CD4-positive, alpha-beta memory T cell (primary cell): ENCODE measurements at regions of chr10 and their contacts with region 1.

Region 1: GRCh38 chr10:22655311-22655981 is 58.9 kb downstream of the PIP4K2A start:
- DNase-seq: peak; percentile 75 to 83 (median 80)
- H3K4me3 ChIP-seq: peak overlapping the region; percentile 12 to 40
- H3K4me3 Mint-ChIP-seq: peak overlapping the region; percentile 79 to 94 (median 84)
- H3K27ac ChIP-seq: peak overlapping the region; percentile 61
- H3K27ac Mint-ChIP-seq: peak overlapping the region; percentile 85 to 95 (median 95)
- H3K4me1 ChIP-seq: peaks cover 100% of the 10 kb centered on the region
- H3K4me1 Mint-ChIP-seq: peaks cover 70 to 100% (median 89%) of the 10 kb centered on the region in 4 donors
- H3K27me3 ChIP-seq: no peaks in the 10 kb centered on the region
- H3K27me3 Mint-ChIP-seq: no peaks in the 10 kb centered on the region

Region 2: GRCh38 chr10:22573820-22574569 is 81.5 kb before region 1 on chr10:
- CTCF ChIA-PET with region 1: interaction called, 16 read pairs
- POLR2A ChIA-PET with region 1: interaction called, 3 read pairs
- intact Hi-C with region 1: no loop called
- DNase-seq: peak; percentile 17 to 40 (median 21)
- H3K4me3 ChIP-seq: no peak overlapping the region
- H3K4me3 Mint-ChIP-seq: peak overlapping the region in 3 of 8 donors; percentile 9 to 77 (median 31)
- H3K27ac ChIP-seq: no peak overlapping the region
- H3K27ac Mint-ChIP-seq: peak overlapping the region; percentile 27 to 78 (median 72)
- H3K4me1 ChIP-seq: peaks cover 37% of the 10 kb centered on the region
- H3K4me1 Mint-ChIP-seq: peaks cover 39 to 77% (median 58%) of the 10 kb centered on the region in 4 donors
- H3K27me3 ChIP-seq: no peaks in the 10 kb centered on the region
- H3K27me3 Mint-ChIP-seq: no peaks in the 10 kb centered on the region

Region 3: DNA sequence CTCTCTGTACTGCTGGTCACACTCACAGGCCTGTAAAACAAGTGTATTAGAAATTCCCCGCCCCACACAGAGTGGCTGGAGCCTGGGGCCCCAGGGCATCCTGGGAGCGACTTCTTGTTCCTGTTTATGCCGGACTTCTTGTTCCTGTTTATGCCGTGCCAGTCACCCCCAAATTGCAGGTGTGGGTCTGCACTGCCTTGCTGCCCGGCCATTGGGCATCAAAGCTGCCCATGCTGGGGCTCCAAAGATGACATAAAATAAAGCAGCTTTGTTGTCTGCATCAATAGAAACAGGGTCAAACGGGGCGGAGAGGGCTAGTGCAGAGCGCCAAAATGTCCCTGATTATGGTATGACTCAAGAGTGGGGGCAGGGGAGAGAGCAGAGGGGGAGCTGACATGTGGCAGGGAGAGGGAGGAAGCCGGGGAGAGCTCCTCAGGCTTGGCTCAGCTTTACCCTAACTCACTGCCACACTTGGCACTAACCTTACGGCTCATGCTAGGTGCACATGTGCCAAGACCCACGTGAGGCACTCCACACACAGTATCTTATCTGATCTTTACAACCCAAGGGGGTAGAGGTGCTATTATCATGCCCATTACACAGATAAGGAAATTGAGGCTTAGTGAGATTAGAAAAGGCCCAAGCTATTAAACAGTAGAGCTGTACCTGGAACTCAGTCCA is 39.5 kb before region 1 on chr10:
- CTCF ChIA-PET with region 1: interaction called, 39 read pairs
- POLR2A ChIA-PET with region 1: interaction called, 895 read pairs
- intact Hi-C with region 1: loop called (anchors 1 kb)
- DNase-seq: peak in 4 of 5 donors; percentile 32 to 81 (median 44)
- H3K4me3 ChIP-seq: peak overlapping the region; percentile 2 to 6
- H3K4me3 Mint-ChIP-seq: peak overlapping the region; percentile 53 to 85 (median 75)
- H3K27ac ChIP-seq: peak overlapping the region; percentile 53
- H3K27ac Mint-ChIP-seq: peak overlapping the region; percentile 87 to 98 (median 95)
- H3K4me1 ChIP-seq: peaks cover 97% of the 10 kb centered on the region
- H3K4me1 Mint-ChIP-seq: peaks cover 78 to 100% (median 91%) of the 10 kb centered on the region in 4 donors
- H3K27me3 ChIP-seq: no peaks in the 10 kb centered on the region
- H3K27me3 Mint-ChIP-seq: no peaks in the 10 kb centered on the region

Region 4: DNA sequence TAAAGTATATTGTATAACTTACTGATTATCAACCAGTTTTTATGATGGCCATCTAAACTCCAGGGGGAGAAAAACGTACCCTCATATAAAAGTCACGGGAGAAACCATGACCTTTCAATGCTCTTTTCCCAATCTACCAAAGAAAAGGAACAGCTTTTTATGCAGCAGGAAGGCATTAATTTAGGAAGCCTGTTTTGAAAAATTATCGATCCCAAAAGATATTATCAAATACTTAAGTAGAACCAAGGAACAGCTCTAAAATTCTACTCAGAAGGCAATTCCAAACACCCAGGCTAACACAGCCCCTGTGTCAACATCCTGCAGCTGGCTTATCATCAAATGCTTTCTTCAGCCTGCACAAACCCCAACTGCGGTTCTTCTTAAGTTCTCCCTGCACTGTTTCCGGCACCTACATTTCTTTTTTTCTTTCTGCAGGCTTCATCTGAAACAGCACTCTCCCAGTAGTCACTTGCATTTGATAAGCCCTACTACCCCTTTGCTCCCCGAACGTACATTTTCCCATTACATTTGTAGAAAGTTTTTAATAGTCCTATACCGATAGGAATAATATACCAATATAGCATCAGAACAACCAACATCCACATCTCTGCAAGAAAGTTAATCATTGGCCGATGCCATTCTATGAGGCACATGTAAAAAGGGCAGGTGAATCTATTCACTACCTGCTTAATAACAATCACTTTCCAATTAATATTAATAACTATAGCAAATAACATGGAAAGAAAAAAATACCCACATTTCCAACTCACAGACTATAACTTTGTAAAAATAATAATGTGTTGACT is 11.0 kb after region 1 on chr10:
- CTCF ChIA-PET with region 1: interaction called, 37 read pairs
- POLR2A ChIA-PET with region 1: interaction called, 188 read pairs
- intact Hi-C with region 1: loop called (anchors 1 kb)
- DNase-seq: peak; percentile 79 to 88 (median 84)
- H3K4me3 ChIP-seq: peak overlapping the region; percentile 8 to 41
- H3K4me3 Mint-ChIP-seq: peak overlapping the region; percentile 72 to 94 (median 88)
- H3K27ac ChIP-seq: peak overlapping the region; percentile 49
- H3K27ac Mint-ChIP-seq: peak overlapping the region; percentile 50 to 97 (median 90)
- H3K4me1 ChIP-seq: peaks cover 98% of the 10 kb centered on the region
- H3K4me1 Mint-ChIP-seq: peaks cover 53 to 92% (median 72%) of the 10 kb centered on the region in 4 donors
- H3K27me3 ChIP-seq: no peaks in the 10 kb centered on the region
- H3K27me3 Mint-ChIP-seq: no peaks in the 10 kb centered on the region

Region 5: GRCh38 chr10:22682237-22683139 is 27.0 kb after region 1 on chr10:
- CTCF ChIA-PET with region 1: interaction called, 15 read pairs
- POLR2A ChIA-PET with region 1: interaction called, 191 read pairs
- intact Hi-C with region 1: loop called (anchors 1 kb)
- DNase-seq: peak; percentile 77 to 86 (median 81)
- H3K4me3 ChIP-seq: peak overlapping the region in 1 of 2 donors; percentile 15
- H3K4me3 Mint-ChIP-seq: peak overlapping the region; percentile 65 to 92 (median 82)
- H3K27ac ChIP-seq: peak overlapping the region; percentile 81
- H3K27ac Mint-ChIP-seq: peak overlapping the region; percentile 93 to 100 (median 97)
- H3K4me1 ChIP-seq: peaks cover 100% of the 10 kb centered on the region
- H3K4me1 Mint-ChIP-seq: peaks cover 75 to 96% (median 88%) of the 10 kb centered on the region in 4 donors
- H3K27me3 ChIP-seq: no peaks in the 10 kb centered on the region
- H3K27me3 Mint-ChIP-seq: no peaks in the 10 kb centered on the region

Region 6: GRCh38 chr10:22705527-22705926 is 50.1 kb after region 1 on chr10:
- CTCF ChIA-PET with region 1: interaction called, 5 read pairs
- POLR2A ChIA-PET with region 1: interaction called, 189 read pairs
- intact Hi-C with region 1: no loop called
- DNase-seq: no peak
- H3K4me3 ChIP-seq: no peak overlapping the region
- H3K4me3 Mint-ChIP-seq: peak overlapping the region in 7 of 8 donors; percentile 19 to 62 (median 53)
- H3K27ac ChIP-seq: peak overlapping the region; percentile 2
- H3K27ac Mint-ChIP-seq: peak overlapping the region; percentile 25 to 85 (median 72)
- H3K4me1 ChIP-seq: peaks cover 100% of the 10 kb centered on the region
- H3K4me1 Mint-ChIP-seq: peaks cover 89 to 100% (median 96%) of the 10 kb centered on the region in 4 donors
- H3K27me3 ChIP-seq: no peaks in the 10 kb centered on the region
- H3K27me3 Mint-ChIP-seq: no peaks in the 10 kb centered on the region

Region 7: GRCh38 chr10:22854935-22855421 is 199.5 kb after region 1 on chr10:
- CTCF ChIA-PET with region 1: no interaction called
- POLR2A ChIA-PET with region 1: no interaction called
- intact Hi-C with region 1: no loop called
- DNase-seq: no peak
- H3K4me3 ChIP-seq: no peak overlapping the region
- H3K4me3 Mint-ChIP-seq: no peak overlapping the region
- H3K27ac ChIP-seq: no peak overlapping the region
- H3K27ac Mint-ChIP-seq: no peak overlapping the region
- H3K4me1 ChIP-seq: no peaks in the 10 kb centered on the region
- H3K4me1 Mint-ChIP-seq: no peaks in the 10 kb centered on the region
- H3K27me3 ChIP-seq: no peaks in the 10 kb centered on the region
- H3K27me3 Mint-ChIP-seq: peaks cover 0 to 2% of the 10 kb centered on the region in 2 donors